CD8-positive, alpha-beta T cell (primary cell): ENCODE measurements at regions of chr11 and their contacts with region 1.

Region 1: DNA sequence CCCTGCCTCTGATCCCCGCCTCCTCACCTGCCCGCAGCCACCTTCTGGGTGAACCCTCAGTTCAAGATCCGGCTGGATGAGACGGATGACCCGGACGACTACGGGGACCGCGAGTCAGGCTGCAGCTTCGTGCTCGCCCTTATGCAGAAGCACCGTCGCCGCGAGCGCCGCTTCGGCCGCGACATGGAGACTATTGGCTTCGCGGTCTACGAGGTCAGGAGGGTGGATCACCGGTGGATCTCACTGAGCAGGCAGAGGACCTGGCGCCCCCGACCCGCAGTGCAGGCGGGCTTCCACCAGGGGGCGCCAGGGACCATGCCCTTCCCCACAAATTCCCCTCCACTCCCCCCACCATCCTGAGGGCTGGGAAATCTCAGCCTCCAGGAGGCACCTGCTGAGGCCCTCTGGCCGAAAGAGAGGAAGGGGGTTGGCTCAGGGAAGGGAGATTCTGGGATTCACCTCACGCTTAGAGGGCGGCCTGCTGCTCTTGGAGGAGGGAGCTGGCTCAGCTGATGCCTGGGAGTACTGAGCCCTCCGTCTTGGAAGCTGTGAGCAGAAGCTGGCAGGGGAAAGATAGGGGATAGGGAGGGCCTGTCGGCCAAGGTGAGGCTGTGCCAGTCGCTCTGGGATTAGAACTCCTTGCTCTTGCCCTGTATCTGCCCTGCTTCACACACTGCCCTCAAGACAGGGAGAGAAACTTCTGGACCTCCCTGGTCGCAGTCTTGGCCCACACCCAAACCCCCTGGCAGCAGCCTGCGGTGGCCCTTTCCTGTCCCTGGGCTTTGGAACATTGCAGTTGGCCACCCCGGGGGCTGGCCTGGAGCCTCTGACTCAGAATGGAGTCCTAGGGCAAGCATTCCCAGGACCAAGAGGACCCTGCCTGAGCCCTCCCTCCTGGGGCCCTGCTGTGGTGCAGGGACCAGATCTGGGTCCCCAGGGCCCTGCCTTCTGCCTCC is 23.2 kb downstream of the CAPN1 start:
- DNase-seq: peak in 7 of 9 experiments; percentile 16 to 66 (median 63)
- ATAC-seq: peak; percentile 75
- H3K4me3 ChIP-seq: no peak overlapping the region
- H3K4me3 Mint-ChIP-seq: no peak overlapping the region
- H3K27ac ChIP-seq: no peak overlapping the region
- H3K27ac Mint-ChIP-seq: no peak overlapping the region
- H3K4me1 ChIP-seq: no peaks in the 10 kb centered on the region
- H3K4me1 Mint-ChIP-seq: peaks cover 4% of the 10 kb centered on the region
- H3K27me3 ChIP-seq: no peaks in the 10 kb centered on the region
- H3K27me3 Mint-ChIP-seq: no peaks in the 10 kb centered on the region
- CTCF ChIP-seq: peak; percentile 93

Region 2: DNA sequence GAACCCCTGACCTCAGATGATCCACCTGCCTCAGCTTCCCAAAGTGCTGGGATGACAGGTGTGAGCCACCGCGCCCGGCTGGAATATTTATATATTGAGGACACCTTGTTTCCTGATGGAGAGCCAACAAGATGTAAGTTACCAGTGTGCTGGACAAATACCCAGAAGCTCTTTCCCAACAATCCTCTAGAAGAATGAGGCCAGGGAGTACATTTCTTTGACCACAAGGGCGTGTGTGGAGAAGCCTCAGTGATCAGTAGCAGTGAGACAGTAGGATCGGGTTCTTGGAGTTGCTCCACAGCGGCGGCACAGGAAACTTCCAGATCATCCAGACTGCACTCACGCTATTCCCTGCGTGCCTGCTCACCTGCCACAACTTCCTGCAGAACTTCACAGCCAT is 46.6 kb after region 1 on chr11:
- CTCF ChIA-PET with region 1: interaction called, 3 read pairs
- POLR2A ChIA-PET with region 1: no interaction called
- intact Hi-C with region 1: loop called in 1 of 2 experiments (anchors 10 kb)
- DNase-seq: no peak
- ATAC-seq: no peak
- H3K4me3 ChIP-seq: no peak overlapping the region
- H3K4me3 Mint-ChIP-seq: no peak overlapping the region
- H3K27ac ChIP-seq: no peak overlapping the region
- H3K27ac Mint-ChIP-seq: no peak overlapping the region
- H3K4me1 ChIP-seq: no peaks in the 10 kb centered on the region
- H3K4me1 Mint-ChIP-seq: no peaks in the 10 kb centered on the region
- H3K27me3 ChIP-seq: no peaks in the 10 kb centered on the region
- H3K27me3 Mint-ChIP-seq: no peaks in the 10 kb centered on the region
- CTCF ChIP-seq: no peak

Region 3: DNA sequence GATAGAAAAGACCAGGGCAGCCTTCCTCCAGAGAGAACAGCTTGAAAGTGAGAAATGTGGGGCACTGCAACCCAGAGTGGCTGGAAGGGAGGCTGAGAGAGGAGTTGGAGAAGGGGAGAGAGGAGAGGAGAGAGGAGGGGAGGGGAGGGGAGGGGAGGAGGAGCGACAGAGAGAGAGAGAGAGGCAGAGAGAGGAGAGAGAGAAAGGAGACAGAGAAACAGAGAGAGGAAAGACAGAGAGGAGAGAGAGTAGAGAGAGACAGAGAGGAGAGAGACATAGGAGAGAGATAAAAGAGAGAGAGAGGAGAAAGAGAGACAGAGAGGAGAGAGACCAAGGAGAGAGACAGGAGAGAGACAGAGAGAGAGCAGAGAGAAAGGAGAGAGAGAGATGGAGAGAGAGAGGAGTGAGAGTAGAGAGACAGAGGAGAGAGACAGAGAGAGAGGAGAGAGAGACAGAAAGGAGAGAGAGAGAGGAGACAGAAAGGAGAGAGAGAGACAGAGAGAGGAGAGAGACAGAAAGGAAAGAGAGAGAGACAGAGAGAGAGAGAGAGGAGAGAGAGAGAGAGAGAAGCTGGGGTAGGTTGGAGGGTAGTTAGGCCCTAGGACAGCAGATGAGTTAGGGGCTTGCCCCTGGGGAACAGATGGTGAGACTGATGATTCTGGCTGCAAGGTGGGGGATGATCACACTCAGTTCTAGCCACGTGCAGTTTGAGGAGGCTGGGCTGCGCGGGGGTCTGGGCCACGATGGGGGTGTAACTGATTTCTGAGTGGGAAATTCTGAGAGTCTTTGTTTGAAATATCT is 311.4 kb after region 1 on chr11:
- CTCF ChIA-PET with region 1: no interaction called
- POLR2A ChIA-PET with region 1: no interaction called
- intact Hi-C with region 1: loop called in 1 of 2 experiments (anchors 5 kb)
- DNase-seq: peak in 2 of 9 experiments; percentile 14 to 17
- ATAC-seq: no peak
- H3K4me3 ChIP-seq: no peak overlapping the region
- H3K4me3 Mint-ChIP-seq: no peak overlapping the region
- H3K27ac ChIP-seq: no peak overlapping the region
- H3K27ac Mint-ChIP-seq: peak overlapping the region; percentile 74
- H3K4me1 ChIP-seq: peaks cover 5% of the 10 kb centered on the region
- H3K4me1 Mint-ChIP-seq: peaks cover 10% of the 10 kb centered on the region
- H3K27me3 ChIP-seq: no peaks in the 10 kb centered on the region
- H3K27me3 Mint-ChIP-seq: no peaks in the 10 kb centered on the region
- CTCF ChIP-seq: no peak